ENCODE measurements at regions of chr17 and their contacts with region 1.

Region 1: DNA sequence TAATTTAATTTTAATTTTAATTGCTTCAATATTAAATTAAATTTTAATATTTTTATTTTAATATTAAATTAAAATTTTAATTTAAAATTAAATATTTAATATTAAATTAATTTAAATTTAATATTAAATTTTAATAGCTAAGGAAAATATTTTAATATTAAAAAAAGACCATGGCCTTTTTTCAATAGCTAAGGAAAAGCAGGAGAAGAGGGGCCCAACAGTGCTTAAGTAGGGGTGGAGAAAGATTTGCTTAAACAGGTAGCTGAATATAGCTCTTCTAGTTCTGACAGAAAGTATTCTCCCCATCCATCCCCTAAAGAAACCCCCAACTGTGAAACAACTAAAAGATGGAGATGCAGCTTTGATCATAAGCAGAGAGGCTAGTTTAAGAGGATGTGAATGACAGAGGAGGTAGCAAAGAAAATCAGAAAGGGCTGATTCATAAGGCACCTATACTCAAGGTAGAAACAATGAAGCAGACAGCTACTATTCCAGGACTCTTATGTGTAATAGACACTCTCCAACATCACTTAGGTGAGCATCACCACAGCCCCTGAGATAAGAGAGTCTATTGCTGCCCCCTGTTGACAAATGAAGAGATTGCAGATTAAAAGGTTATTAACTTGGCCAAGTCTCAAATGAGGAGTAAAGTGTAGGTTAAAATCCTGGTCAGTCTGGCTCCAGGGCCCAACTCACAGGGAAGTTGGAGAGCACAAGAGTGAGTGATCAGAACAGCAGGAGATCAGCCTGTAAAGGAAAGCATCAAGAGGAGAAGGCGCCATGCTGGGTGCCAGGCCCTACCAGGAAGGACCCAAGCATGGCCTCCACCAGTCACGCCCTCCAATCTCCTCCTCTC is 7.8 kb upstream of the RNASEK start:
- H3K4me3 ChIP-seq: no peak overlapping the region
- H3K27ac ChIP-seq: no peak overlapping the region
- H3K4me1 ChIP-seq: no peaks in the 10 kb centered on the region
- CTCF ChIP-seq: peak; percentile 58

Region 2: GRCh38 chr17:6853764-6854442 is 150.7 kb before region 1 on chr17:
- CTCF ChIA-PET with region 1: interaction called, 33 read pairs
- POLR2A ChIA-PET with region 1: no interaction called
- H3K4me3 ChIP-seq: peak overlapping the region; percentile 62
- H3K27ac ChIP-seq: peak overlapping the region; percentile 78
- H3K4me1 ChIP-seq: no peaks in the 10 kb centered on the region
- CTCF ChIP-seq: peak; percentile 57

Region 3: DNA sequence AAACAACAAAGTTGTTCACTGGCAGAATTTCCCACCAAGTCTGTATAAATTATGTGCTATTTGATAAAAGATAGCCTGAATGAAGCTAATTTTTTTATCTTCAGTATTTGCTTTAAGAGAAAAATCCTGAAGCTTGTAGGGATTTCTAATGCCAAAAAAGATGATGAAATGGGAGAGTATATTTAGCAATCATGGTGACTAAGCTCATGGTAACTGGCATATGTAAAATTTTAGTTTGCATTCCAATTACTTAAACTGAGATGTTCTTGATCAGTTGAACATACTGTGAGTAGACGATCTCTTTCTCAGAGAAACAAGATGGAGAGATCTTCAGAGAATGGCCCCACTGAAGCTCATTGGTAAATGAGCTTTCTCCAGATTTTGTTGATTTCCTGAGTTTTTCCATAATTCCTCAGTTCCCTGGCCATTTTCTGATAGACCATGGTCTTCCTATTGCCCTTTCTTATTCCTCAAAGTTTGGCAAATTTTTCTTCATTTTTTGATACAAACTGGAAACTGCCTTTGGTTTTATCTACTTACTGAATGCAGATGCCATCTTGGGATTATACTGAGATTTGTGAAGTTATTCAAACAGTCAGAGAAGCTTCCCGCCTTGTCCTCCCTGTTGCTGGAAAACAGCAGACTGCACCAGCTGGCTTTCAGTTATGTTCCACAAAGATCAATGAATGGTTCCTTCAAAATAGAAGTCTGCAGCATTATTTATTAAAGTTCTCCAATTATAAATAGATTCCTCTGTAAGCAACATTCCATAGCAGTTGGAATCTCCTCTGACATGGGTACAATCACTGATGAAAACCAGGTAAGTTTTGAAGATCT is 77.1 kb before region 1 on chr17:
- CTCF ChIA-PET with region 1: interaction called, 15 read pairs
- POLR2A ChIA-PET with region 1: no interaction called
- H3K4me3 ChIP-seq: no peak overlapping the region
- H3K27ac ChIP-seq: no peak overlapping the region
- H3K4me1 ChIP-seq: no peaks in the 10 kb centered on the region
- CTCF ChIP-seq: no peak

Region 4: GRCh38 chr17:6981426-6981825 is 23.2 kb before region 1 on chr17:
- CTCF ChIA-PET with region 1: interaction called, 12 read pairs
- POLR2A ChIA-PET with region 1: no interaction called
- H3K4me3 ChIP-seq: no peak overlapping the region
- H3K27ac ChIP-seq: no peak overlapping the region
- H3K4me1 ChIP-seq: no peaks in the 10 kb centered on the region
- CTCF ChIP-seq: no peak

Region 5: GRCh38 chr17:7021993-7022778 is 17.6 kb after region 1 on chr17:
- CTCF ChIA-PET with region 1: interaction called, 19 read pairs
- POLR2A ChIA-PET with region 1: no interaction called
- H3K4me3 ChIP-seq: no peak overlapping the region
- H3K27ac ChIP-seq: no peak overlapping the region
- H3K4me1 ChIP-seq: peaks cover 3% of the 10 kb centered on the region; the same call in 1 of the 2 replicates
- CTCF ChIP-seq: peak; percentile 90

Region 6: DNA sequence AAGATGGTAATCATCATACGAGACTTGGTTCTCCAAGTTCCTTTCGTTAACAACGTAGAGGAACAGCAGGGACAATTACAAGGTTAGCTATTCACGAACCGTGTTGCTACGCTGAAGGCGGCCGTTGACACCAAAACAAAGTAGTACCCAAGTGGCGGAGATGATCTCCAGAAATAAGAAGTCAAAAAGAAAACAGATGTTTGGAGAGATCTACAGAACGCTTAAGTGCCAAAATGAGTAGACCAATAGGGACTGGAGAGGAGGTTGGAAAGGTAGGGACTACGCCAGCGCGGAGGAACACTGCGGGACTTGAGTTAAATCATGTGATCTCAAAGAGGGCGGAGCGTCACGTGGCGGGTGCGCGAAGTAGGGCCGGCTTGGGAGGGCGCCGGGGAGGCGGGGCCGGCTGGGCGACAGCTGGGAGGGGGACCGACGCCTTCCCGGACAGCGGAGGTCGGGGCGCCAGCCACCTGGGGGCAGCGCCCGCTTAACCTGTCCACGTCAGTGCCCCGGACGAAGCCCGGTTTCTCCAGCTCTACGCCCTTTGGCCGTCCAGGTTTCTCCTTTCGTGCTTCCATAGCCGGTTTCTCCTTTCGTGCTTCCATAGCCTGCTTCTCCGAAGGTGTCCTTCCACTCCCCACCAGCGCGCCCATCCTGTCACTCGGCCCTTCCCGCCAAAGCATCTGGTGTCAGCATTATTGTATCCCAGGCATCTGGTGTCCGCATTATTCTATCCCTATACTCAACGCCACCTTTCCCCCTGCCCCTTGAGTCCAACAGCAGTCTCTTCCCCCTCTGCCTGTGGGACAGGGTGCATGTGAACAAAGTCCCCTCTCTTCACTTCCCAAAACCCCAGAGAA is 238.3 kb after region 1 on chr17:
- CTCF ChIA-PET with region 1: no interaction called
- POLR2A ChIA-PET with region 1: no interaction called
- H3K4me3 ChIP-seq: peak overlapping the region; percentile 82
- H3K27ac ChIP-seq: peak overlapping the region; percentile 91
- H3K4me1 ChIP-seq: peaks cover 6% of the 10 kb centered on the region
- CTCF ChIP-seq: peak; percentile 78